ENCODE measurements at regions of chr21 and their contacts with region 1.

Region 1: DNA sequence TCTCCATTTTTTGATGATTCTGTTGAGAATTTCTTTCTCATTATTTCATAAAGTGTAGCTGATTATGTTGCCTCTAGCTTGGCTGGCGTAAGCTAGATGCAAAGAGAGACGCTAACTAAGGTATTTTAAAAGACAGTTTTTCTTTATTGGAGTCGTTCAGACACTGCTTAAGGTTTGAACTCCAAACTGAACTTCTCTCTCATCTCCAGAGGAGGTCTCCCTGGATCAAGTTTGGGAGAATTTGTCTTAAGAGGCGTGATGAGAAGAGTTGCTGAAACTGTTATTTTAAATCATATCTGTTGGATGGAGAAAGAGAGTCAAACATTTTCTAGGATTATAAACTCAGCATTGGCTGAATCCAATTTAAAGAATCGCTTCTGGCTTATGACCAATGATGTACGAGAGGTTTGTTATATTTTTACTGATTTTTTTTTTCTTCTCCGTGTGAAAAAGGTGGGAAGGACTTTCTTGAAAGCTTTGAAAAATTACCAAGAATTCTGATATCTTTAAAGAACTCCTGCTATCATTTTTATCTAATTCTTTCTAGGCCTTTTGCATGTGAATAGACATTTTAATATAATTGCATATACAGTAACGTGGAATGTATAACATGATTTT is 34.0 kb downstream of the MAP3K7CL start:
- DNase-seq: no peak
- H3K4me3 ChIP-seq: no peak overlapping the region
- H3K27ac ChIP-seq: no peak overlapping the region
- H3K4me1 ChIP-seq: peaks cover 0 to 34% (median 3%) of the 10 kb centered on the region in 3 donors
- H3K27me3 ChIP-seq: no peaks in the 10 kb centered on the region
- CTCF ChIP-seq: peak in 5 of 6 experiments; percentile 52 to 80 (median 64)
- POLR2A ChIP-seq: no peak

Region 2: DNA sequence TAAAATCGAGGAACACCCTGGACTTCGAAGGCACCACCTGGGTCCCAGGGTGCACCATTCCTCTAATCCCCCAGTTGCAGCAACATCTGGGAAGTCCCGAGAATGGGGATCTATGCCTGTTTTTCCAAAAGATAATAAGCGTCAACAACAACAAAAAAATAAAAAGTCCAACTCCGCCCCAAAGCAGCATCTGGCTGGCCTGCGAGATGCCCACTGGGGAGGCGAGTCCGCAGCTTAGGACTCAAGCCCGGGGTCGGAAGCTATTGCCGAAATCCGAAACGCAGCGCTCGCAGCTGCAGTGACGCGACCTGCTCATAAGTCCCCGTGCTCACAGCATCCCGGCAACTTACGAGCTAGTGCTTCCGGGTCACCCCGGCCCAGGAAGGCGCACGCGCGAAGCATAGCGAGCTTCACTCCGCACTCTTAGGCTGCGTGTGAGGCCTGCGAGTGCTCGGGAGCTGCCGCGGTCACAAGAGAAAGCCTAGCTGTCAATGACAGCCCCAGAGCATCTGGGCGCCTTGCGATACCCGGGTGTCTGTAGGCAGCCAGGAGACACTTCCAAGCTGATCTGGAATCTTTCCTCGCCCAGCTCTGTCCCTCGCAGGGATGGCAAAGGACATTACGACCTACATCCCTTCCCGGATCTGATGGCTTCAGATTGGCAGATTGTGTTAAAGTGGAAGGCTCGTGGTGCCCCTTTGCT is 161.8 kb before region 1 on chr21:
- intact Hi-C with region 1: no loop called
- DNase-seq: peak; percentile 75
- H3K4me3 ChIP-seq: peak overlapping the region; percentile 38 to 77 (median 64)
- H3K27ac ChIP-seq: peak overlapping the region; percentile 88 to 97 (median 96)
- H3K4me1 ChIP-seq: peaks cover 4 to 19% (median 5%) of the 10 kb centered on the region in 3 donors
- H3K27me3 ChIP-seq: no peaks in the 10 kb centered on the region
- CTCF ChIP-seq: peak in 1 of 6 experiments; percentile 2
- POLR2A ChIP-seq: peak in 3 of 4 donors; percentile 69 to 97 (median 95)

Region 3: GRCh38 chr21:29114765-29115164 is 49.7 kb before region 1 on chr21:
- intact Hi-C with region 1: no loop called
- DNase-seq: no peak
- H3K4me3 ChIP-seq: no peak overlapping the region
- H3K27ac ChIP-seq: no peak overlapping the region
- H3K4me1 ChIP-seq: no peaks in the 10 kb centered on the region
- H3K27me3 ChIP-seq: no peaks in the 10 kb centered on the region
- CTCF ChIP-seq: no peak
- POLR2A ChIP-seq: no peak

Region 4: DNA sequence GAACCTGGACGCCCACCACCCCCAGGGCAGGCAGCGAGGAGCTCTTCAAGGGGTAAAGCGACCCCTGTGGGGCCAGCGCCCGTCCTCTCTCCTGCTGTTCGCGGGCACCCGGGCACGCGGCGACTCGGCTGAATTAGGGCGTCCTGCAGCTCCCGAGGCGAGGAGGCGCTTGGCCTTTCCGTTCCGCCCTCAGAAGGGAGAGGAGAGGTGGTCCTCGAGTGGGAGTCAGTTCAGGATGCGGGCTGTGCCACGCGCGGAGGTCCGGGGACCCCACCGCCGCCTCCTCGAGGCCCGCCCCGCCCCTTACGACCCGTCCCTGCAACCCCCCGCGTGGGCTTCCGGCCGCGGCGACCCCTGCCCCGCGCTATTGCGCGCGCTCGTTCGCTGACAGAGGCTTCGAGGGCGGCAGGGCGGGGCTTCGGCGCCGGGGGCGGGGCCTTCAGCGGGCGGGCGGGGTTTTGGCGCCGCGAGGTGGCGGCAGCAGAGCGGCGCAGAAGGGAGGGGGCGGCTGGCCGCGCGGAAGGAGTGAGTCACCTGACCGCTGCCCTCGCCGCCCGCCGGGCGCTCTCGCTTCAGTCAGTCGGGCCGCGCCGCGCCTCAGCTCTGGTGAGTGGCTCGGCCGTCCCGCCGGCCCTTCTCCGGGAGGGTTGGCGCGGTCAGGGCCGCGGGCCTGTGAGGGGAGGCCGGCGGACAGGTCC is 134.1 kb after region 1 on chr21 and contains the start of gene BACH1:
- intact Hi-C with region 1: loop called (anchors 5 kb)
- DNase-seq: peak; percentile 58
- H3K4me3 ChIP-seq: peak within 1 kb of the TSS; percentile 73 to 99 (median 96)
- H3K27ac ChIP-seq: peak within 1 kb of the TSS; percentile 91 to 100 (median 100)
- H3K4me1 ChIP-seq: peaks cover 14 to 54% (median 22%) of the 10 kb centered on the region in 3 donors
- H3K27me3 ChIP-seq: no peaks in the 10 kb centered on the region
- CTCF ChIP-seq: peak; percentile 26 to 73 (median 57)
- POLR2A ChIP-seq: peak in 3 of 4 donors; percentile 29 to 97 (median 94)
- total RNA-seq, gene BACH1: 39.6 to 54.6 (median 44.8) TPM

Region 5: GRCh38 chr21:29372063-29372802 is 207.8 kb after region 1 on chr21:
- intact Hi-C with region 1: loop called (anchors 5 kb)
- DNase-seq: peak; percentile 10
- H3K4me3 ChIP-seq: no peak overlapping the region
- H3K27ac ChIP-seq: no peak overlapping the region
- H3K4me1 ChIP-seq: peaks cover 0 to 3% (median 3%) of the 10 kb centered on the region in 3 donors
- H3K27me3 ChIP-seq: no peaks in the 10 kb centered on the region
- CTCF ChIP-seq: peak; percentile 55 to 86 (median 80)
- POLR2A ChIP-seq: no peak